B cell (primary cell): ENCODE measurements at regions of chr3 and their contacts with region 1.

Region 1: DNA sequence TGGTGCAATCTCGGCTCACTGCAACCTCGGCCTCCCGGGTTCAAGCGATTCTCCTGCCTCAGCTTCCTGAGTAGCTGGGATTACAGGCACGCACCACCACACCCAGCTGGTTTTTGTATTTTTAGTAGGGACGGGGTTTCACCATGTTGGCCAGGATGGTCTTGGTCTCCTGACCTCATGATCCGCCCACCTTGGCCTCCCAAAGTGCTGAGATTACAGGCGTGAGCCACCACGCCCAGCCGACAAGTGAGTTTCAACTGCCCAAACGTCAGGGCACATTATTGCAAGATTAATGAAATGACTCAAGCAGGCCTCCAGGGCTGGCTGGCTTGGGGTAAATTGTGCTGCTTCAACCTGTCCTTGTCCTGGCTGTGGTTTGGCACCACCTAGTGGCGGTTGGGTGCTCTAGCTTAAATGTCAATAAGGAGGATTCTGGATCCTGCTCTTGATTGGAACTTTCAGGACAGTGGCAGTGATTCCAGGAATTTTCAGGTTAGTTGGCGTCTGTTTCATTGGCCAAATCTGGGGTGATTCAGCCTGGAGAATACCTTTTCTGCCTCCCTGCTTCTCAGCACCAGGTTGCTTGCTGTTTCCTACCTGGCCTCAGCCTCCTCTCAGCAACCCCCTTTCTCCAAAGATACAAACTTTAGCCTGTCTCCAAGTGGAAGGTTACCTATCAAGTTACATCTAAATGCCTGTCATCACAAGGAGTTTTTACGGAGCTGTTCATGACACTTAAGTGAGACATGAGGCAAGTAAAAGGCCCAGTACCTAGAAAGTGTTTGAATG is 32.4 kb upstream of the SACM1L start:
- DNase-seq: peak; percentile 88
- ATAC-seq: peak; percentile 89
- H3K4me3 ChIP-seq: no peak overlapping the region
- H3K4me3 Mint-ChIP-seq: no peak overlapping the region
- H3K27ac ChIP-seq: no peak overlapping the region
- H3K27ac Mint-ChIP-seq: peak overlapping the region; percentile 53
- H3K4me1 ChIP-seq: peaks cover 20 to 21% of the 10 kb centered on the region in 2 donors
- H3K4me1 Mint-ChIP-seq: peaks cover 49% of the 10 kb centered on the region
- H3K27me3 ChIP-seq: no peaks in the 10 kb centered on the region
- H3K27me3 Mint-ChIP-seq: no peaks in the 10 kb centered on the region
- CTCF ChIP-seq: peak; percentile 91

Region 2: GRCh38 chr3:45507820-45508317 is 148.9 kb before region 1 on chr3:
- CTCF ChIA-PET with region 1: interaction called, 247 read pairs
- POLR2A ChIA-PET with region 1: interaction called, 4 read pairs
- intact Hi-C with region 1: loop called (anchors 1 kb)
- DNase-seq: no peak
- ATAC-seq: no peak
- H3K4me3 ChIP-seq: no peak overlapping the region
- H3K4me3 Mint-ChIP-seq: no peak overlapping the region
- H3K27ac ChIP-seq: no peak overlapping the region
- H3K27ac Mint-ChIP-seq: no peak overlapping the region
- H3K4me1 ChIP-seq: no peaks in the 10 kb centered on the region
- H3K4me1 Mint-ChIP-seq: no peaks in the 10 kb centered on the region
- H3K27me3 ChIP-seq: no peaks in the 10 kb centered on the region
- H3K27me3 Mint-ChIP-seq: no peaks in the 10 kb centered on the region
- CTCF ChIP-seq: no peak

Region 3: GRCh38 chr3:45529697-45530096 is 127.1 kb before region 1 on chr3:
- CTCF ChIA-PET with region 1: interaction called, 24 read pairs
- POLR2A ChIA-PET with region 1: interaction called, 5 read pairs
- intact Hi-C with region 1: no loop called
- DNase-seq: no peak
- ATAC-seq: no peak
- H3K4me3 ChIP-seq: no peak overlapping the region
- H3K4me3 Mint-ChIP-seq: no peak overlapping the region
- H3K27ac ChIP-seq: no peak overlapping the region
- H3K27ac Mint-ChIP-seq: no peak overlapping the region
- H3K4me1 ChIP-seq: no peaks in the 10 kb centered on the region
- H3K4me1 Mint-ChIP-seq: no peaks in the 10 kb centered on the region
- H3K27me3 ChIP-seq: no peaks in the 10 kb centered on the region
- H3K27me3 Mint-ChIP-seq: no peaks in the 10 kb centered on the region
- CTCF ChIP-seq: no peak

Region 4: DNA sequence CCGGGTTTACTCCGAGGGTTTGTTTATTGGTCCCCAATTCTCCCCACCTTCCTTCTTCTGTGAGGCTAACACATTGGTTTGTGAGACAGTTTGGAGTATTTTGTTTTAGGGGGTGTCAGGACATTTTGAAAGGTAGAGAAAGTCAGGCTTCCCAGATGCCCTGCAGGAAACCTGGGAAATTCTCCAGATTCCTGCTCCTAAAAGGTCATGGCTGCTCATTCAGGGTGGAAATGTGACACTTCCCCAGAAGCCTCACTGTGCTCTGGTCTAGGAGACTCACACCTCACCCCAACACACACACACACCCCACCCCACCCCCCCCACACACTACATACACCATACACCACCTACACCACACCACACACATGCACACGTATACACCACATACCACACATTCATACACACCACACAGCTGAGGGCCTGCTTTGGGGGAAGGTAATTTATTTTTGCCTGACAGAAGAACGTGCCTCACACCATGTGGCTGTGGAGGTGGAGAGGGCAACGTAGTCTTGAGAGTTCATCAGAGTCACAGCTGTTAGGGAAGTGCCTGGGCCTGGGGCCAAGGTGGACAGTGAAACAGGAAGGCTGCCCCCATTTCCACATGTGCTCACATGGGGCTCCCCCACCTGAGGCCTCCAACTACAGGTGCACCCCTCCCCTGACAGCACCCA is 102.6 kb before region 1 on chr3:
- CTCF ChIA-PET with region 1: interaction called, 16 read pairs
- POLR2A ChIA-PET with region 1: no interaction called
- intact Hi-C with region 1: no loop called
- DNase-seq: peak; percentile 16
- ATAC-seq: no peak
- H3K4me3 ChIP-seq: no peak overlapping the region
- H3K4me3 Mint-ChIP-seq: no peak overlapping the region
- H3K27ac ChIP-seq: no peak overlapping the region
- H3K27ac Mint-ChIP-seq: no peak overlapping the region
- H3K4me1 ChIP-seq: peaks cover 12 to 19% of the 10 kb centered on the region in 2 donors
- H3K4me1 Mint-ChIP-seq: peaks cover 21% of the 10 kb centered on the region
- H3K27me3 ChIP-seq: no peaks in the 10 kb centered on the region
- H3K27me3 Mint-ChIP-seq: no peaks in the 10 kb centered on the region
- CTCF ChIP-seq: no peak

Region 5: DNA sequence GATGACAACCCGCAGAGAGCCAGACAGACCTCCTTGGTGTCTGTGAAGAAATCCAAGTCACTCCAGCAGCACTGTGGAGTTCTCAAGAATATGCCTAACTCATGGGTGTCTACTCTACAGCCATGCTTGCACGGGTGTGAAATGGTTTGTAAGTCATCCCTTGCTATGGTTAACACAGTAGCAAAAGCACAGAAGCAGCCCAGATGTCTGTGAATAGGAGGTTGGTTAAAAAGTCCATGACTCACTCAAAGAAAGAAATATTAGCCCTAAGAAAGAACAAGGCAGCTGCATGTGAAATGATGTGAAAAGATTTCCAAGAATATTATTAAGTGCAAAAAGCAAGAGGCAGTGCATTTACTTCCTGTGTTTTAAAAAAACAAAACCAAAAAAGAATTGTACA is 74.3 kb before region 1 on chr3:
- CTCF ChIA-PET with region 1: interaction called, 21 read pairs
- POLR2A ChIA-PET with region 1: interaction called, 10 read pairs
- intact Hi-C with region 1: no loop called
- DNase-seq: no peak
- ATAC-seq: no peak
- H3K4me3 ChIP-seq: no peak overlapping the region
- H3K4me3 Mint-ChIP-seq: no peak overlapping the region
- H3K27ac ChIP-seq: no peak overlapping the region
- H3K27ac Mint-ChIP-seq: no peak overlapping the region
- H3K4me1 ChIP-seq: no peaks in the 10 kb centered on the region
- H3K4me1 Mint-ChIP-seq: peaks cover 10% of the 10 kb centered on the region
- H3K27me3 ChIP-seq: no peaks in the 10 kb centered on the region
- H3K27me3 Mint-ChIP-seq: no peaks in the 10 kb centered on the region
- CTCF ChIP-seq: no peak

Region 6: DNA sequence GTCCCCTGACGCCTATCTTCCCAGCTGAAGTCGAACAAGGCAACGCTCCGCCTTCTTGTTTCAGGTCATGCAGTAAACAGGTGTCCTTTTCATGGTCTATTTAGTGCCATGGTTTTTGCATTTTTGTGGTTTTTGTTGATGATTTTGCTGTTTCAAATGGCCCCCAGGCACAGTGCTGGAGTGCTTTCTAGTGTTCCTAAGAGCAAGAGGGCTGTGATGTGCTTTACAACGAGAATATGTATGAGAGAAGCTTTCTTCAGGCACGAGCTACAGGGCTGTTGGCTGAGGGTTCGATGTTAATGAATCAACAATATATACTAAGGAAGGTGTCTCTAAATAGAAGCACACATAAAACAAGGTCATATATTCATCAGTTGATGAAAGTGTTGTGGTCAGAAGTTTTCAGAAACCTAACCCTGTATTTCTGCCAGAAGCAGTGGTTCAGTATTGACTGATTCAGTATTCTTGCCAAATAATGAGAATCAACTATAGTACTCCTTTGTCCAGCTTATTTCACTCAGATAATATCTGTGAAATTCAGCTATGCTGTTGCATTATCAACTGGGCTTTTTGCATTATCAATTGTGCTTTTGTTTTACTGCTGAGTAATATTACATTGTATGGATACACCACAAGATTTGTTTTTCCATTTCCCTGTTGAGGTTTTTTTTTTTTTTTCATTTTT is 43.7 kb before region 1 on chr3:
- CTCF ChIA-PET with region 1: interaction called, 24 read pairs
- POLR2A ChIA-PET with region 1: interaction called, 4 read pairs
- intact Hi-C with region 1: loop called (anchors 5 kb)
- DNase-seq: peak; percentile 73
- ATAC-seq: peak; percentile 67
- H3K4me3 ChIP-seq: peak overlapping the region in 1 of 5 experiments; percentile 4
- H3K4me3 Mint-ChIP-seq: peak overlapping the region; percentile 65
- H3K27ac ChIP-seq: peak overlapping the region in 1 of 2 donors; percentile 42
- H3K27ac Mint-ChIP-seq: peak overlapping the region; percentile 47
- H3K4me1 ChIP-seq: peaks cover 51 to 63% of the 10 kb centered on the region in 2 donors
- H3K4me1 Mint-ChIP-seq: peaks cover 85% of the 10 kb centered on the region
- H3K27me3 ChIP-seq: no peaks in the 10 kb centered on the region
- H3K27me3 Mint-ChIP-seq: no peaks in the 10 kb centered on the region
- CTCF ChIP-seq: no peak